B cell (primary cell): ENCODE measurements at regions of chr3 and their contacts with region 1.

Region 1: GRCh38 chr3:186849374-186849975 is 7.0 kb downstream of the ADIPOQ start:
- DNase-seq: peak; percentile 81
- ATAC-seq: peak; percentile 88
- H3K4me3 ChIP-seq: no peak overlapping the region
- H3K4me3 Mint-ChIP-seq: no peak overlapping the region
- H3K27ac ChIP-seq: no peak overlapping the region
- H3K27ac Mint-ChIP-seq: no peak overlapping the region
- H3K4me1 ChIP-seq: peaks cover 9 to 11% of the 10 kb centered on the region in 2 donors
- H3K4me1 Mint-ChIP-seq: peaks cover 13% of the 10 kb centered on the region
- H3K27me3 ChIP-seq: no peaks in the 10 kb centered on the region
- H3K27me3 Mint-ChIP-seq: peaks cover 16% of the 10 kb centered on the region
- CTCF ChIP-seq: peak; percentile 70

Region 2: GRCh38 chr3:186909078-186909853 is 59.8 kb after region 1 on chr3:
- CTCF ChIA-PET with region 1: interaction called, 14 read pairs
- POLR2A ChIA-PET with region 1: no interaction called
- intact Hi-C with region 1: no loop called
- DNase-seq: peak; percentile 72
- ATAC-seq: peak; percentile 95
- H3K4me3 ChIP-seq: peak overlapping the region in 3 of 5 experiments; percentile 8 to 47 (median 30)
- H3K4me3 Mint-ChIP-seq: peak overlapping the region; percentile 78
- H3K27ac ChIP-seq: peak overlapping the region; percentile 74
- H3K27ac Mint-ChIP-seq: peak overlapping the region; percentile 94
- H3K4me1 ChIP-seq: peaks cover 17 to 18% of the 10 kb centered on the region in 2 donors
- H3K4me1 Mint-ChIP-seq: peaks cover 35% of the 10 kb centered on the region
- H3K27me3 ChIP-seq: no peaks in the 10 kb centered on the region
- H3K27me3 Mint-ChIP-seq: no peaks in the 10 kb centered on the region
- CTCF ChIP-seq: no peak

Region 3: DNA sequence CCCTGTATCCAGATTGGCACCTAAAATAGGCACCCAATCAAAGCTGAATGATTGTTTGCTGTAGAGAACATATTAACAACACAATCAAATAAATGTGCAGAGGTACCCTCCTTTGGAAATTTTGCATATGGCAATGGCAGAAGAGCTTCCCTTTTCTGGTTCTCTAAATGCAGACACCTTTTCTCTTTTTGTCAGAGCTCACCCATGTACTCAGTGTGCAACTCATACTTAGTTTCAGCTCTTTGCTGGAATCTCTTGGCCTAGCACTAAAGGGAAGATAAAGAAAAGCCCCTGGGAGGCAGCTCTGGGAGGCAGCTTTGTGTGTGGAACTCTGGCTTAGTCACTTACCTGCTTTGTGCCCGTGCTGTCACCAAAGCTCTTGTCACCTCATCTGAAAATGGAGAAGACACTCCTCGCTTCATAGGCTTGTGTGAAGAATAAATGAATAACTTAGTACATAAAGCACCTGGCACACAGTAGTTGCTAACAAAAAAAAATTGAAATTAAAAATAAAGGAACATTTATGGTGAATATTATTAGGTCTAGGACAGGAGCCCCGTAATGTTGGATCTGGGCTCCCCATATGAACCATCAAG is 109.7 kb after region 1 on chr3:
- CTCF ChIA-PET with region 1: interaction called, 16 read pairs
- POLR2A ChIA-PET with region 1: no interaction called
- intact Hi-C with region 1: no loop called
- DNase-seq: peak; percentile 61
- ATAC-seq: peak; percentile 72
- H3K4me3 ChIP-seq: no peak overlapping the region
- H3K4me3 Mint-ChIP-seq: peak overlapping the region; percentile 45
- H3K27ac ChIP-seq: peak overlapping the region; percentile 11 to 71
- H3K27ac Mint-ChIP-seq: peak overlapping the region; percentile 86
- H3K4me1 ChIP-seq: peaks cover 33 to 40% of the 10 kb centered on the region in 2 donors
- H3K4me1 Mint-ChIP-seq: peaks cover 73% of the 10 kb centered on the region
- H3K27me3 ChIP-seq: no peaks in the 10 kb centered on the region
- H3K27me3 Mint-ChIP-seq: no peaks in the 10 kb centered on the region
- CTCF ChIP-seq: no peak

Region 4: GRCh38 chr3:187016639-187017345 is 167.3 kb after region 1 on chr3:
- CTCF ChIA-PET with region 1: interaction called, 14 read pairs
- POLR2A ChIA-PET with region 1: no interaction called
- intact Hi-C with region 1: no loop called
- DNase-seq: peak; percentile 83
- ATAC-seq: peak; percentile 58
- H3K4me3 ChIP-seq: peak overlapping the region in 2 of 5 experiments; percentile 4 to 28
- H3K4me3 Mint-ChIP-seq: peak overlapping the region; percentile 75
- H3K27ac ChIP-seq: peak overlapping the region; percentile 92 to 96
- H3K27ac Mint-ChIP-seq: peak overlapping the region; percentile 90
- H3K4me1 ChIP-seq: peaks cover 97% of the 10 kb centered on the region in 2 donors
- H3K4me1 Mint-ChIP-seq: peaks cover 92% of the 10 kb centered on the region
- H3K27me3 ChIP-seq: no peaks in the 10 kb centered on the region
- H3K27me3 Mint-ChIP-seq: no peaks in the 10 kb centered on the region
- CTCF ChIP-seq: no peak

Region 5: DNA sequence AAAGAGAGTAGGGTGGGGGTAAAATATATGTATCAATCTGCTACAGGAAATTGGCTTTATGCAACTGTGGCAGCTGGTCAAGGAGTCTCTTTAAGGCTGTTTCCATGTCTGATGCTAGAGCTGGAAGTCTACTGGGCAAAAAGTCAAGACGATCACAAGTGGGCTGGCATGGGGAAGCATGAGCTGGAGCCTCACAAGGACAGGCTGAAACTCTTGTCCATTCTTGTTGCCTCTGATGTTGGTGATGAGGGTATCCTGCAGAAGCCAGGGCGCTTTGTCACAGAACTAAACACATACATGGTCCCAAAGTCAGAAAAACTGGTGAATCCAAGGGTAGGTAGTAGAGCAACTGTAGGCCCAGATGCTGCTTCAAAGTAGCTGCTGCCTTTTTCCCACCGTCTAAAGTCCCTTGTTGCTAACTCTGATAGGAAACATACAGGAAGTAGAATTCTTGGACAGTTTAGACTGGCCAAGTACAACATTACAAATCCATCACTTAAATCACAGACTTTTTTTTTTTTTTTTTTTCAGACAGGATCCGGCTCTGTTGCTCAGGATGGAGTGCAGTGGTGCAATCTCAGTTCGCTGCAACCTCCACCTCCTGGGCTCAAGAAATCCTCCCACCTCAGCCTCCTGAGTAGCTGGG is 235.7 kb after region 1 on chr3:
- CTCF ChIA-PET with region 1: interaction called, 14 read pairs
- POLR2A ChIA-PET with region 1: no interaction called
- intact Hi-C with region 1: no loop called
- DNase-seq: no peak
- ATAC-seq: no peak
- H3K4me3 ChIP-seq: no peak overlapping the region
- H3K4me3 Mint-ChIP-seq: no peak overlapping the region
- H3K27ac ChIP-seq: no peak overlapping the region
- H3K27ac Mint-ChIP-seq: no peak overlapping the region
- H3K4me1 ChIP-seq: peaks cover 0 to 3% of the 10 kb centered on the region in 2 donors
- H3K4me1 Mint-ChIP-seq: peaks cover 12% of the 10 kb centered on the region
- H3K27me3 ChIP-seq: no peaks in the 10 kb centered on the region
- H3K27me3 Mint-ChIP-seq: no peaks in the 10 kb centered on the region
- CTCF ChIP-seq: no peak

Region 6: DNA sequence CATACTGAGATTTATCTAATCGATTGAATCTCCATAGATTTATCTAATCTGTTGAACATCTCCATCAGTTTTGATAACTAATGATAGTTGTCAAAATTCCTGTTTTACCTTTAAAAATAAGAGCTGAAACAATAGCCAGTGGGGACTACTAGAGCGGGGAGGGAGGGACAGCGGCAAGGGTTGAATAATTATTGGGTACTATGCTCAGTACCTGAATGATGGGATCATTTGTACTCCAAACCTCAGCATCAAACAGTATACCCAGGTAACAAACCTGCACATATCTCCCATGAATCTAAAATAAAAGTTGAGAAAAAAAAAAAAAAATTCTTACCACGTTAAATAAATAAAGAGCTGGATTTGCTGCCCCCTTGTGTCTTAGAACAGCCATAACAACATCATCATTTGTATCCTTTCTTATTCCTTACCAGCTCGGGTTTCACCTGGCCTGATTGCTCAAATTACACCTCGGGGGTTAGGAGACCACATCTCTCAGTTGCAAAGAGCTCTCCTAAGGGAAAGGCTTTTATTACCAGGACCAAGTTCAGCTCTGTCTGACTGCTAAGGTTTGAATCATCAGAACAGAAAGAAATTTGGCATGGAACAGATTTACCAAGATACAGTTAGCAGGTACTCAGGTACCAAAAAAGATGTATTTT is 315.5 kb after region 1 on chr3:
- CTCF ChIA-PET with region 1: interaction called, 215 read pairs
- POLR2A ChIA-PET with region 1: no interaction called
- intact Hi-C with region 1: loop called (anchors 1 kb)
- DNase-seq: peak; percentile 81
- ATAC-seq: peak; percentile 72
- H3K4me3 ChIP-seq: no peak overlapping the region
- H3K4me3 Mint-ChIP-seq: no peak overlapping the region
- H3K27ac ChIP-seq: no peak overlapping the region
- H3K27ac Mint-ChIP-seq: no peak overlapping the region
- H3K4me1 ChIP-seq: no peaks in the 10 kb centered on the region
- H3K4me1 Mint-ChIP-seq: no peaks in the 10 kb centered on the region
- H3K27me3 ChIP-seq: peaks cover 0 to 6% (median 0%) of the 10 kb centered on the region in 4 experiments
- H3K27me3 Mint-ChIP-seq: peaks cover 23% of the 10 kb centered on the region
- CTCF ChIP-seq: peak; percentile 81